Posterior vena cava (tissue), 2 donors: ENCODE measurements at regions of chr3 and their contacts with region 1.

Region 1: GRCh38 chr3:160661660-160662059 is 15.3 kb upstream of the ARL14 start:
- DNase-seq: no peak

Region 2: GRCh38 chr3:160676547-160677303 is 15.1 kb after region 1 on chr3 and contains the start of gene ARL14:
- intact Hi-C with region 1: loop called in 1 of 2 experiments (anchors 1 kb)
- DNase-seq: no peak
- total RNA-seq, gene ARL14: not detected

Region 3: GRCh38 chr3:160830792-160831191 is 169.1 kb after region 1 on chr3:
- intact Hi-C with region 1: no loop called
- DNase-seq: no peak